ENCODE measurements at regions of chr2 and their contacts with region 1.

Region 1: DNA sequence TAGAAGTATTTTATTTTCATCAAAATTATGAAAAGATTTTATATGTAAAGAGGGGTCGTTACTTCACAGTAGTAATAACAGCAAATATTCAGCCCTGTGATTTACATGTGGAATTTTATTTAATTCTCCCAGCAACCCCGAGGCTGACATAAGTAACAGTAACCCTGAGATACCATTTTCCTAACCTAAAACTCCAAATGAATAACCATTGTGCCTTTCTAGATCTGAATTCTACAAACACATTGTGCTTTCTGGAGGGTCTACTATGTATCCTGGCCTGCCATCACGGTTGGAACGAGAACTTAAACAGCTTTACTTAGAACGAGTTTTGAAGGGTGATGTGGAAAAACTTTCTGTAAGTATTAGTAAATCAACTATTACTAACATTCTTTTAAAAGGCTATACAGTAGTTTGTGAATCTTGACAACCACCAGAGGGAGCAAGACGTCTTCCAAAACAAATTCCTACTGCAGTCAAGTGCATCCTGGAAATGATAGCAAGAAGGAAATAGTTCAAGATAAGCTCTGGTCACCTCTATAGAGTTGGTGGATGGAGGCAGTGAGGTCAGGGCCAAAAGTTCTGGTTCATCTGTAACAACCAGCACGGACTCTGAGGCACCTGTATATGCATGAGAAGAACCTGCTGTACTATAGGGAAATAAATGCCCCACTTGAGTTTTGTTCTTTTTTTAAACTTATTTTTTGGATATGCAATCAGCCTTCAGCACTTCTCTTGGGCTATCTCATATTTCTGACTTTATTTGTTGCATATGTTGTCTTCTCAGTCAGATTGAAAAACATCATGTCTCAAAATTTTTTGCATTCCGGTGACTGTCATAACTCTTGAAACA is 37.4 kb downstream of the ACTR2 start:
- DNase-seq: no peak

Region 2: DNA sequence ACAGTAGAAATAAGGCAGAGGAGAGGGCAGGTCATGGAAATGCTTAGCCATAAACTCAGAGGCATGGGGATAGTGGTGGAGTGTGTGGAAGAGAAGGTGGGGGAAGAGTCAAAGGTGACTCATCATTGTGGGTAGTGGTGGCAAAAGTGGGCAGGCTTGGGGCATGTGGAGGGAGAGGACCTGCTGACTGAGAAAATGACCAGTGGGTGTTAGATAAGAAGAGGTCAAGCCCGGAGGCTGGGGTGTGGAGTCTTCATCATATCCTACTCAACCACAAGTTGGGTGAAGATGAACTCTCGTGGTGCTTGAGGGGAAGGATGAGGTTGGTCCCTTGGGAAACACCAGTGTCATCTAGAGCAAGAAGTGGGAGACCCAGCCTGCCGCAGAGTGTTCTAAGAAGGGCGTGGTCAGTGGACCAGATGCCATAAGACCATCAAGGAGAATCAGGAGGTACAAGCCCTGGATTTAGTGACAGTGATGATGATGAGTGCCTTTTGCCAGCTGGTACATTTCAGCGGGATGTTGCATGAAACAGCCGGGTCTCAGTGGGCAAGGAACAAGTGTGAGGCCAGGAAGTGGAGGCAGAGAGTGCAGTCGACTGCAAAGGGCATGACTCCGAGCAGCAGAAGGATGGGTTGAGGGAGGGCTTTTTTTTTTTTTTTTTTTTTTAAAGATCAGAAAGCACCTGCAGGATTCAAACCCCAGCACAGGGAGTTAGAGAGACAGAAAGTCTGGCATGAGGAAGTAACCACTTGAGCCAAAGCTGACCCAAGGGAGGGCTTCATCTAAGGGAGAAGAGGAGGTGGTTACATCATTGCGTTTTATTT is 289.9 kb after region 1 on chr2:
- intact Hi-C with region 1: loop called (anchors 5 to 10 kb)
- DNase-seq: no peak

Measured in posterior vena cava (tissue), 2 donors.